Caco-2 (cell line): ENCODE measurements at regions of chr14 and their contacts with region 1.

Region 1: DNA sequence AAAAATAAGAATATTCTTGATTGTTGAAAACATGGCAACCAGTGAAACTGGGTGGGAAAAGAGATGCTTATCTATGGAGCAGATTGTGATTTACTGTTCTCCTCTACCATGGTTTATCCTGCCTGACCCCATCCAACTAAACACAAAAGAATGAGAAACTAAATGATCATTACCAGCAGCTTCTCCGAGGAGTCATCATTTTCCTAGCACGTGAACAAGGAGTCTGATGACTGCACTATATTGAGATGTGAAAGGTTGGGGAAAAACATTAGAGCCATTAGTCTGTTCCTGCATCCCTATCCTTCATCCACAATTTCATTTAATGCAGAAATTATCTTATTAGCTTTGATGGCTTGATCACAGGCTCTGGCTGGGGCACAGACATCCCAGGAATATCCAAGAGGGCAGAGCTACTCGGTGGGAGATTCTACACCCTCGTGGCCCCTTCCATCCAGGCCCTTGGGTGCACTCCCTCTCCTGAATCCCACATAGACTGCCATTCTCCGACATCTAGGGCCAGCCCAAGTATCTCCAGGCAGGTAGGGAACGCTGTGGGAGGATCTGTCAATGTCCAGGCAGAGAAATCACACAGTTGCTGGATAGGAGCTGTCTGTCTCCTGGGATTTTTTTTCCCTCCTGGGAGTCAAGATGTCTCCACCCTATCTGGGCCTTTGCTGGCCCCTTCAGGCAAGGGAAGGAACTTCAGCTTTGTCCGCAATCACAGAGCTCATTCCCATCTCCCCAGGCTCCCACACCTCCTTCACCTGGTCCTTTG is 43.3 kb upstream of the DHRS4 start:
- DNase-seq: peak; percentile 63 to 76
- H3K4me3 ChIP-seq: no peak overlapping the region
- H3K4me3 Mint-ChIP-seq: no peak overlapping the region
- H3K27ac Mint-ChIP-seq: no peak overlapping the region
- H3K4me1 ChIP-seq: no peaks in the 10 kb centered on the region
- H3K4me1 Mint-ChIP-seq: no peaks in the 10 kb centered on the region
- H3K27me3 ChIP-seq: no peaks in the 10 kb centered on the region
- H3K27me3 Mint-ChIP-seq: peaks cover 15% of the 10 kb centered on the region
- CTCF ChIP-seq: peak; percentile 81 to 84

Region 2: DNA sequence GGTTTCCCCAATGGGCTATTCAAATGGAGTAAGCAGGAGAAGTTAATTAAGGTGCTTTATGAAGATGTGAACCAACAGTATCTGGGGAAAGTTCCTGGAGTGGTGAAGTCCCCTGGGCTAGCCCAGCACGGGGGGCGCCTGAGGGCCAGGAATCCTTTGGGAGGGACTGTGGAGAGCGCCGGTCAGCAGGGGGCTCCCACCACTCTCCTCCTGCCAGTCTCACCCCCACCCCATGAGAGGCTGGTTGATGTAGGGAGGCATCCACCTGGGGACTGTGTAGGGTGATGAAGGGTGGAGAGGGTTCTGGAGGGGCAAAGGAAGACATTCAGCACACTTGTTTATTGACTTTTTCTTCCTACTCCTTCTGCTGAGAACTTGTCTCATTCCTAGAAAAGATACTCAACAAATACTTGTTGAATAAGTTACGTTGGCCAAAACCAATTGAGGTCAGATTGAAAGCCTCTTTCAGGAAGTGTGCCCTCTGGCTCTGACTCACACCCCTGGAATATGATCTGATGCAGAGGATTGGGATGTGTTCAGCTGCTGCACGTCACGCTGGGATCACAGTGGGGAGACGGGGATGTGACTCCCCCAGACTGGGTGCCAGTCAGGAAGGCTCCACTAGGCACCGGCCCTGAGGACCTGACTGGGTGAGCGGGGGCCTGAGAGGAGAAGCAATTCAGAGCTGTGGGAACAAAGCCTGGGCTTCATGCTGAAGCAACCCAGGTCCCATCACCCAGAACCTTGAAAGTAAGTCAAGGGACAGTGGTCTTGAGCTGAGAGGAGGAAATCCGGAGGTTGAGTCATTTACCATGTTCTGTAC is 795.4 kb before region 1 on chr14:
- CTCF ChIA-PET with region 1: no interaction called
- POLR2A ChIA-PET with region 1: no interaction called
- intact Hi-C with region 1: no loop called
- DNase-seq: no peak
- H3K4me3 ChIP-seq: no peak overlapping the region
- H3K4me3 Mint-ChIP-seq: no peak overlapping the region
- H3K27ac Mint-ChIP-seq: no peak overlapping the region
- H3K4me1 ChIP-seq: no peaks in the 10 kb centered on the region
- H3K4me1 Mint-ChIP-seq: no peaks in the 10 kb centered on the region
- H3K27me3 ChIP-seq: no peaks in the 10 kb centered on the region
- H3K27me3 Mint-ChIP-seq: no peaks in the 10 kb centered on the region
- CTCF ChIP-seq: no peak

Region 3: GRCh38 chr14:23631702-23632460 is 278.4 kb before region 1 on chr14:
- CTCF ChIA-PET with region 1: interaction called, 24 read pairs
- POLR2A ChIA-PET with region 1: no interaction called
- intact Hi-C with region 1: loop called (anchors 1 kb)
- DNase-seq: peak in 1 of 2 experiments; percentile 71
- H3K4me3 ChIP-seq: no peak overlapping the region
- H3K4me3 Mint-ChIP-seq: no peak overlapping the region
- H3K27ac Mint-ChIP-seq: no peak overlapping the region
- H3K4me1 ChIP-seq: no peaks in the 10 kb centered on the region
- H3K4me1 Mint-ChIP-seq: no peaks in the 10 kb centered on the region
- H3K27me3 ChIP-seq: no peaks in the 10 kb centered on the region
- H3K27me3 Mint-ChIP-seq: no peaks in the 10 kb centered on the region
- CTCF ChIP-seq: peak; percentile 83 to 89

Region 4: GRCh38 chr14:23665375-23666192 is 244.7 kb before region 1 on chr14:
- CTCF ChIA-PET with region 1: interaction called, 31 read pairs
- POLR2A ChIA-PET with region 1: no interaction called
- intact Hi-C with region 1: loop called (anchors 1 kb)
- DNase-seq: peak in 1 of 2 experiments; percentile 47
- H3K4me3 ChIP-seq: no peak overlapping the region
- H3K4me3 Mint-ChIP-seq: no peak overlapping the region
- H3K27ac Mint-ChIP-seq: no peak overlapping the region
- H3K4me1 ChIP-seq: no peaks in the 10 kb centered on the region
- H3K4me1 Mint-ChIP-seq: no peaks in the 10 kb centered on the region
- H3K27me3 ChIP-seq: no peaks in the 10 kb centered on the region
- H3K27me3 Mint-ChIP-seq: peaks cover 18% of the 10 kb centered on the region
- CTCF ChIP-seq: peak; percentile 22 to 63

Region 5: DNA sequence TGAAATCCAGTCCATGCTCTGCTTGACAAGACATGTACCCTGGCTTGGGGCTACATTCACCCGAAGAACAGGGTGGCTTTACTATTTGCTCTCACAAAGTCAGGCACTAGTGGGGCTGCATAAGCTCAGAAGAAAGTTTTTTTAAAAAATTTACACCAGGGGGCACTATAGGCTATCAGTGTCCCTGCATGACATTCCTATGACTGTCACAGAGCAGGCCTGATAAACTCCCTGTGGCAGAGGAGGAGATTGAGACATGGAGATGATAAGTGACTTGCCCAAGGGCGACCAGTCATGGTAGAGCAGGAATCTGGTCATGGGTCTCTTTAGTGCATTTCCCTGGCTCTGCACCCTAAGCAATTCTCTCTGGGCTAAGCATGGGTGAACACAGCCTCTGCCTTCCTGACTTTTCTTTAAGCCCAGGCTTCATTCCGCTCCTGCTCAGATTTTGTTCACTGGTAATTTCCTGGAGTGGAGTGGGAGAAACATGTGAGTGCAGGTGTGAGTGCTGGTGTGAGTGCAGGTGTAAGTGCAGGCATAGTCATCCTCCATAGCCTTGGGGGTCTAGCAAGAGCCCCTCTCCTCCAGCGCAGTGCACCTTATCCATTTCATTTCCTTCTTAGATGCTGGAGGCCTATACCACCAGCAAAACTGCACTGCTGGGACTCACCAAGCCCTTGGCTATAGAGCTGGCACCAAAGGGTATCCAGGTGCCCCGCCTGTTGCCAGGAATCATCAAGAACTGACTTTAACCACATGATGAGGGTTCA is 182.5 kb before region 1 on chr14:
- CTCF ChIA-PET with region 1: interaction called, 55 read pairs
- POLR2A ChIA-PET with region 1: no interaction called
- intact Hi-C with region 1: loop called (anchors 1 kb)
- DNase-seq: peak; percentile 69 to 73
- H3K4me3 ChIP-seq: no peak overlapping the region
- H3K4me3 Mint-ChIP-seq: no peak overlapping the region
- H3K27ac Mint-ChIP-seq: no peak overlapping the region
- H3K4me1 ChIP-seq: no peaks in the 10 kb centered on the region
- H3K4me1 Mint-ChIP-seq: no peaks in the 10 kb centered on the region
- H3K27me3 ChIP-seq: no peaks in the 10 kb centered on the region; the same call in 1 of the 2 replicates
- H3K27me3 Mint-ChIP-seq: peaks cover 7% of the 10 kb centered on the region
- CTCF ChIP-seq: peak; percentile 55 to 72

Region 6: DNA sequence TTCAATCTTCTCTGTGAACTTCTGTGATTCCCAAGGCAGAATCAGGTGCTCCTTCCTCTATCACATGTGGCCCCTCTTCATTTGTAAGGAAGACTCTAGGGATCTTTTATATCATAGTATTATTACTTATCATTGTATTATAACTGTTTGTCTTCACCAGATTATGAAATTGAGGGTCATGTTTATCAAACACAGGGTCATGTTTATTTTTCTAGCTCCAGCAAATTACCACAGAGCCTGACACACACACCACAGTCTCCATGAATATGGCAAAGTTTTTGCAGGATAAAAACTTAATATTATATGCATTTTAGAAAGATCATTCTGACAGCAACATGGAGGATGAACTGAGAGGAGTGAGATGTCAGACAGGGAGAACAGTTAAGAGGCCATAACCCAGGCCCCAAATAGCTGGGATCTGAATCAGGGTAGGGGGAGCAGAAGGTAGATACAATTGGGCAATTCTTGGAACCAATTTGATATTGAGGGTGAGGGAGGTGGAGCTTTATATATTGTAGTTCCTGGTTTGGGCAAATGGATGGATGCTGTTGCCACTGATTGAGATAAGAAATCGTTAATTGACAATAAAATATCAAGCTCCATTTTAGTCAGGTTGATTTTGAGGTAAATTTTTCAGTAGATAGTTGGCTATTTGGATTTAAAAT is 143.4 kb before region 1 on chr14:
- CTCF ChIA-PET with region 1: interaction called, 5 read pairs
- POLR2A ChIA-PET with region 1: no interaction called
- intact Hi-C with region 1: loop called (anchors 1 kb)
- DNase-seq: no peak
- H3K4me3 ChIP-seq: no peak overlapping the region
- H3K4me3 Mint-ChIP-seq: no peak overlapping the region
- H3K27ac Mint-ChIP-seq: no peak overlapping the region
- H3K4me1 ChIP-seq: no peaks in the 10 kb centered on the region
- H3K4me1 Mint-ChIP-seq: no peaks in the 10 kb centered on the region
- H3K27me3 ChIP-seq: no peaks in the 10 kb centered on the region
- H3K27me3 Mint-ChIP-seq: peaks cover 10% of the 10 kb centered on the region
- CTCF ChIP-seq: no peak